ENCODE measurements at regions of chr2 and their contacts with region 1.

Region 1: DNA sequence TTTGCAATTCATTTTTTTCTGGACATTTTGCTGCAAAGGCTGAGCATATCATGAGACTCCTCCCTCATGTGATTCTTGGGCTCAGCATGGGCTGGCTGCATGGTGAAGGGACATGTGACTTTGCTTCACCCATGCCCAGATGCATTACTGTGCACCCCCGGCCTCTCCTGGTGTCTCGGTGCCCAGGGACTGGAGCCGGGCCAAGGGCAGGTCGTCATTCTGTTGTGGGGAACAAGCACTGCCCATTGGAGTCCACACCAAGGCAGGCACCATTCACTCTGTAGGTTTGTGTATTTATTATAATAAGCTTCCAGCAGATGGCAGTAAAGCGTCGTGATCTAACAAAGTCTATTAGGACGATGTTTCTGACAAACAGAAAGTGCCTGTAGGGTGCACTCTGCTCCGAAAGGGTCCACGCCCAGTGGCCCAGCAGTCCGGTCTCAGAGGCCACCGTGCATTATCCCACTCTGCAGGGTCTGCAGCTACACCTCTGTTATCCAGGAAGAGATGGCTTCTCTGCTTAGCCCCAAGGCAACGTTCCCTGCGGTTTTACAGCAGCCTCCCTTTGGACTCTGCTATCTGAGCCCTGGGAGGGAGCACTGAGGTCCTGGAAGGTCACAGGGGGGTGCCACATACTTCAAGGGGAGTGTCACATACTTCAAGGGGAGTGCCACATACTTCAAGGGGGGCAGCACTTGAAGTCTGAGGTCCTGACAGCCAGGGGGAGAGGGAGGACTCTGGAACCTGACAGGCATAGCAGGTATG is 219.6 kb downstream of the TSN start:
- DNase-seq: peak; percentile 93
- H3K4me3 ChIP-seq: no peak overlapping the region
- H3K27ac ChIP-seq: peak overlapping the region; percentile 76
- H3K4me1 ChIP-seq: peaks cover 47% of the 10 kb centered on the region
- H3K27me3 ChIP-seq: no peaks in the 10 kb centered on the region
- CTCF ChIP-seq: peak; percentile 74

Region 2: DNA sequence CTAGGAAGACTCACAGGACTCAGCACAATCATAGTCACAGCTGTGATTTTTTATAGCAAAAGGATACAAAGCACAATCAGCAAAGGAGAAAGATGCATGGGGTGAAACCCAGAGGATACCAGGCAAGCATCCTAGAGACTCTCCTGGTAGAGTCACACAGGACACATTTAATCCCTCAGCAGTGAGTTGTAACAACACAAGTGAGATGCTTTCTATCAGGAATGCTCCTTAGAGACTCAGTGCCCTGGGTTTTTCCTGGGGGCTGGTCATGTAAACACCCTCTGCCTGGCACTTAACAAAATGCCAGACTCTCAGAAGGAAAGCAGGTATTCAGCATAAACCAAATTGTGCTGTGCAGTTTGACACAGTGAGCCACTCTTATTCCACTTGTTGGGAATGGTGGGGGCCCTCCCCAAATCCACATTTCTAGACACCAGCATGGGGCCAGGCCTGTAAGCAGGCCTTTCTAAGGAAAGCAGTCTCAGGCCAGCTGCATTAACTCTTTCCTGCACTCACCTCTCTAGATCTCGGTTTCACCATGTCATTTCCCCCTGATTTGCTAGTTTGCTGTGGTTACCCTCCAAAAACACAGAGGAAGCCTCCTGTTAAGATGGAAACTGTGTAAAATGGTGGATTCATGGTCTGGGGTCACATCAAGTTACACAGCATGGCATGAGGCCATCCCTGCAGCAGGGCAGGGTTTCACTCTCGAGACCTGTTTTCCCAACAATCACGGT is 461.3 kb before region 1 on chr2:
- CTCF ChIA-PET with region 1: no interaction called
- POLR2A ChIA-PET with region 1: no interaction called
- intact Hi-C with region 1: no loop called
- DNase-seq: no peak
- H3K4me3 ChIP-seq: no peak overlapping the region
- H3K27ac ChIP-seq: no peak overlapping the region
- H3K4me1 ChIP-seq: no peaks in the 10 kb centered on the region
- H3K27me3 ChIP-seq: no peaks in the 10 kb centered on the region
- CTCF ChIP-seq: no peak

Region 3: DNA sequence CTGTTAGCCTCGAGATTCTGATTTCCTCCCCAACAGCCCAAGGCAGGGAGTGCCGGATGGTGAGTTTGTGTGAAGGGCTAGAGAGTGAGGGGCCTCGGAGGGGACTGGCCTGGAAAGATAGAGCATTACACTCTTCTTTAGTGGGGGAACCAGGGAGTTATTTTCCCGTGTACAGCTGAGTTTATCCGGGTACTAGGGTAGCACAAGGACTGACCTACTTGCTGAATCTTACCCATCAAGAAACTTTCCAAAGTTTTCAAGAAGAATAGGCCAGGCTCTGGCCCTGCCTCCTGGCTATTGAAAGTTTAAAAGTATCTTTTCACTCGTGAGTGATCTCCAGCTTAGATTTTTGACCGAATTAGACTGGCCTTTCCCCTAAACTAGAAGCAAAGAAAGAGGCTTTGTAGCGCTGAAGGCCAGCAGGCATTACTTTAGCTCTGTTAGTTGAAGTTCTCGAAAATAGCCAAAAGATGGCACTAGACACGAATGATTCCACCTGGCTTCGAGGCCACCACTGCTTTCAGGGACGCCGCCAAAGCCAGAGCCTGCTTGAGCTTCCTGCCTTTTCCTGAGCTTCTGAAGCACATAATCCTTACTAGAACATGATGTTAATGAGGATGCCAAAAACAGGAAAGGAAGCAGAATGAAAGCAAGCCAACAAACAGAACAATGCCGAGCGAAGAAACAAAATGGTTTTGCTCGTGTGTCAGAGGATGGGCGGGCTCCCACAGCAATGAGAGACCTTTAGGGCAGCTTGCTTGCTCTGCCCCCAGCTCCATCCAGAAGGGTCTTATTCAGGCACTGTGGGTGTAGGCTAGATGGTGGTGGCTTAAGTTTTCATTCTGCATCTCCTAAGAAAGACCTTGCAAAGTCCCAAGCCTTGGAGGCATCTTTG is 163.9 kb before region 1 on chr2:
- CTCF ChIA-PET with region 1: interaction called, 6 read pairs
- POLR2A ChIA-PET with region 1: no interaction called
- intact Hi-C with region 1: loop called (anchors 2 kb)
- DNase-seq: peak; percentile 89
- H3K4me3 ChIP-seq: no peak overlapping the region
- H3K27ac ChIP-seq: no peak overlapping the region
- H3K4me1 ChIP-seq: peaks cover 10% of the 10 kb centered on the region
- H3K27me3 ChIP-seq: no peaks in the 10 kb centered on the region
- CTCF ChIP-seq: peak; percentile 80

Region 4: GRCh38 chr2:121897335-121897970 is 77.6 kb before region 1 on chr2:
- CTCF ChIA-PET with region 1: no interaction called
- POLR2A ChIA-PET with region 1: no interaction called
- intact Hi-C with region 1: loop called (anchors 2 kb)
- DNase-seq: peak; percentile 90
- H3K4me3 ChIP-seq: no peak overlapping the region
- H3K27ac ChIP-seq: no peak overlapping the region
- H3K4me1 ChIP-seq: peaks cover 6% of the 10 kb centered on the region
- H3K27me3 ChIP-seq: no peaks in the 10 kb centered on the region
- CTCF ChIP-seq: peak; percentile 88

Region 5: GRCh38 chr2:122078451-122078850 is 103.4 kb after region 1 on chr2:
- CTCF ChIA-PET with region 1: no interaction called
- POLR2A ChIA-PET with region 1: no interaction called
- intact Hi-C with region 1: no loop called
- DNase-seq: no peak
- H3K4me3 ChIP-seq: no peak overlapping the region
- H3K27ac ChIP-seq: no peak overlapping the region
- H3K4me1 ChIP-seq: peaks cover 8% of the 10 kb centered on the region
- H3K27me3 ChIP-seq: no peaks in the 10 kb centered on the region
- CTCF ChIP-seq: no peak

Region 6: GRCh38 chr2:122136056-122136455 is 161.0 kb after region 1 on chr2:
- CTCF ChIA-PET with region 1: no interaction called
- POLR2A ChIA-PET with region 1: no interaction called
- intact Hi-C with region 1: loop called (anchors 2 kb)
- DNase-seq: peak; percentile 71
- H3K4me3 ChIP-seq: no peak overlapping the region
- H3K27ac ChIP-seq: no peak overlapping the region
- H3K4me1 ChIP-seq: peaks cover 5% of the 10 kb centered on the region
- H3K27me3 ChIP-seq: no peaks in the 10 kb centered on the region
- CTCF ChIP-seq: peak; percentile 76

Region 7: DNA sequence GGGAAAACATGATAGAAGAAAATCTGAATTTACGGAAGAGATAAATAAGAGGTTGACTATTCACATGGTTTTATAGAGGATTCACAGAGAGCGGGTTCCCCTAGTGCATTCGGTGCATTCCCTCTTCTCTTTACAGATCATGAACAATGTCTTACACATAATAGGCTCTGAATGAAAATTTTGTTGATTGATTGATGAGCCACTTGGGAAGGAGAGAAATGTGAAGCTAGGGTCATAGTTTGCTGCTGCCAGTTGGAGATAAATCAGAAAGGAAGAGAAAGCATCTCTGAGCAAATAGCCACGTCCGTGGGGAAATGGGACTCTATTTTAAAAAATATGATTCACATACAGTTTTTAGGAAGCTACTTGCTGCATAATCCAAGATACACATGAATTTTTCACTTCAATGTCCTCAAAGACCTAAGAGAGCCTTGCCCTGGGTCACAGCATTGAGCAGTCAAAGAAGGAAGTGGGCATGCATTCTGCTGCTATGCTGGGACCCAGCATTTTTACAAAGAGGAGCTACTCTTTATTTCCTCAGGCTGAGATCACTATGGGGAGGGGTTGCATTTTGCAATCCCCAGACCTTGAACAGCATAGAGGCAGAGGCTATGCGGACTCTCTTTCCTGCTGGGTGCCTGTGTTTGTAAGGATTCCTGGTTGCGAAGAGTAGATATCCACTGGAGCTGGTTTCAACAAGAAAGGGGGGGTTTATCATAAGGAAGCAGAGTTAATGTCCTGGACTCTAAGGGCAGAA is 175.6 kb after region 1 on chr2:
- CTCF ChIA-PET with region 1: no interaction called
- POLR2A ChIA-PET with region 1: no interaction called
- intact Hi-C with region 1: no loop called
- DNase-seq: no peak
- H3K4me3 ChIP-seq: no peak overlapping the region
- H3K27ac ChIP-seq: no peak overlapping the region
- H3K4me1 ChIP-seq: peaks cover 6% of the 10 kb centered on the region
- H3K27me3 ChIP-seq: no peaks in the 10 kb centered on the region
- CTCF ChIP-seq: no peak

Region 8: GRCh38 chr2:122191341-122191740 is 216.3 kb after region 1 on chr2:
- CTCF ChIA-PET with region 1: no interaction called
- POLR2A ChIA-PET with region 1: no interaction called
- intact Hi-C with region 1: loop called (anchors 1 kb)
- DNase-seq: peak; percentile 91
- H3K4me3 ChIP-seq: no peak overlapping the region
- H3K27ac ChIP-seq: peak overlapping the region; percentile 12
- H3K4me1 ChIP-seq: peaks cover 44% of the 10 kb centered on the region
- H3K27me3 ChIP-seq: no peaks in the 10 kb centered on the region
- CTCF ChIP-seq: peak; percentile 90

Region 9: GRCh38 chr2:122451040-122451439 is 476.0 kb after region 1 on chr2:
- CTCF ChIA-PET with region 1: no interaction called
- POLR2A ChIA-PET with region 1: no interaction called
- intact Hi-C with region 1: loop called (anchors 10 kb)
- DNase-seq: peak; percentile 64
- H3K4me3 ChIP-seq: no peak overlapping the region
- H3K27ac ChIP-seq: no peak overlapping the region
- H3K4me1 ChIP-seq: no peaks in the 10 kb centered on the region
- H3K27me3 ChIP-seq: no peaks in the 10 kb centered on the region
- CTCF ChIP-seq: peak; percentile 64

Region 10: GRCh38 chr2:122500316-122501105 is 525.4 kb after region 1 on chr2:
- CTCF ChIA-PET with region 1: no interaction called
- POLR2A ChIA-PET with region 1: interaction called, 5 read pairs
- intact Hi-C with region 1: loop called (anchors 2 kb)
- DNase-seq: peak; percentile 96
- H3K4me3 ChIP-seq: peak overlapping the region; percentile 12
- H3K27ac ChIP-seq: peak overlapping the region; percentile 98
- H3K4me1 ChIP-seq: peaks cover 59% of the 10 kb centered on the region
- H3K27me3 ChIP-seq: no peaks in the 10 kb centered on the region
- CTCF ChIP-seq: no peak

Measured in A673 (cell line).